Esophagus muscularis mucosa (tissue), 4 donors: ENCODE measurements at regions of chr11 and their contacts with region 1.

Region 1: GRCh38 chr11:65117216-65118096 is at the start of gene ZNHIT2:
- DNase-seq: peak; percentile 100
- H3K4me3 ChIP-seq: peak within 1 kb of the TSS; percentile 63 to 85 (median 69)
- H3K27ac ChIP-seq: peak within 1 kb of the TSS; percentile 81 to 95 (median 87)
- H3K4me1 ChIP-seq: peaks cover 48 to 64% (median 52%) of the 10 kb centered on the region in 4 donors
- H3K27me3 ChIP-seq: no peaks in the 10 kb centered on the region
- CTCF ChIP-seq: peak; percentile 93 to 99 (median 96)
- EP300 ChIP-seq: no peak
- POLR2A ChIP-seq: no peak
- total RNA-seq, gene ZNHIT2: 7.5 to 24.4 (median 18.0) TPM

Region 2: GRCh38 chr11:64207256-64208085 is 910.0 kb before region 1 on chr11:
- intact Hi-C with region 1: no loop called
- DNase-seq: no peak
- H3K4me3 ChIP-seq: peak overlapping the region; percentile 40 to 56 (median 46)
- H3K27ac ChIP-seq: peak overlapping the region; percentile 71 to 81 (median 77)
- H3K4me1 ChIP-seq: peaks cover 19 to 50% (median 35%) of the 10 kb centered on the region in 4 donors
- H3K27me3 ChIP-seq: no peaks in the 10 kb centered on the region
- CTCF ChIP-seq: no peak
- EP300 ChIP-seq: no peak
- POLR2A ChIP-seq: no peak

Region 3: GRCh38 chr11:64924102-64924851 is 193.2 kb before region 1 on chr11 and contains the start of gene PPP2R5B:
- intact Hi-C with region 1: loop called (anchors 5 kb)
- DNase-seq: peak; percentile 98
- H3K4me3 ChIP-seq: peak within 1 kb of the TSS; percentile 85 to 100 (median 90)
- H3K27ac ChIP-seq: peak within 1 kb of the TSS; percentile 96 to 99 (median 97)
- H3K4me1 ChIP-seq: peaks cover 26 to 30% (median 29%) of the 10 kb centered on the region in 4 donors
- H3K27me3 ChIP-seq: no peaks in the 10 kb centered on the region
- CTCF ChIP-seq: peak in 1 of 3 experiments; percentile 22
- EP300 ChIP-seq: no peak
- POLR2A ChIP-seq: peak; percentile 73
- total RNA-seq, gene PPP2R5B: 24.1 to 38.8 (median 29.0) TPM